ENCODE measurements at regions of chr1 and their contacts with region 1.

Region 1: GRCh38 chr1:26877326-26877725 is 12.8 kb downstream of the GPN2 start:
- DNase-seq: no peak
- ATAC-seq: no peak
- H3K4me3 Mint-ChIP-seq: no peak overlapping the region
- H3K27ac Mint-ChIP-seq: no peak overlapping the region
- H3K4me1 Mint-ChIP-seq: 0 out of 2 replicates have a peak, but pooled peaks cover 3% of the 10 kb centered on the region
- H3K27me3 Mint-ChIP-seq: no peaks in the 10 kb centered on the region
- CTCF ChIP-seq: no peak

Region 2: DNA sequence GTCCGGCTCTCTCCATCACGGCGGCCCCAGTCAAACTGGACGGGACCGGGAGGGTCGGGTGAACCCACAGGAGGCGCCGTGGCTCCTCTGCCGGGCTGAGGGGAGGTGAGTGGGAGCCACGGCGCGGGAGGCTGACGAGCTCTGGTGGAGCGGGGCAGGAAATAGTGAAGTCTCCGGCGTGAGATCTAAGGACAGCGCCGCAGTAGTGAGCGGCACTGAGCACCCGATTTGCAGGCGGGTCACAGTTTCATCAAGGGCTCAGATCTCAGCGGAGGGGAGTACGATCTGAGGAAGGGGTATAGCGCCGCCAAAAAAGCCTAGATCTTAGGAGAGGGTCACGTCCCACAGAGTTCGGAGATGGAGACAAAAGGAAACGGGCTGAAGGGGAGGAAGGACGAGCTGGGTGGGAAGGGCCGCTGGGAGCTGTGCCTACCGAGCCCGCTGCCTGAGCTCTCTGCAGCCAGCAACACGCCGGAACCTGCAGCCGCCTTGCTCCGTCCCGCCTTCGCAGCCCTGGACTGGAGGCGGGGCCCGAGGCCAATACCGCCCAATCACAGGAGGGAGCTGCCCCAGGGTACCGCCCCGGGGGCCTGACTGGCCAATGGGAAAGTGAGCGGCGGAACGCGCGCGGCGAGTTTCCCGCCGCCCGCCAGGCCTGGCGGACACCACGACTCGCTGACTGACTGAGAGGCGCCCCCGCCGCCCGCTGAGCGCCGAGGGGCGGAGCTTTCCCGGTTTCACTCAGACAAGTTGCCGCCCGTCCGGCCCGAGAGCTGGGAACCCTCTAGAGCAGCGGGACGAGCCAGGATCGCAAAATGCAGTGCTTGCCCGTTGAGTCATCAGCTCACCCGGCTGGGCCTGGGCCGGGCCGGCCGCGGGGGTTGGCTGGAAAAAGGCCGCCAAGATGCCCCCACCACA is 12.5 kb before region 1 on chr1:
- CTCF ChIA-PET with region 1: interaction called, 11 read pairs
- POLR2A ChIA-PET with region 1: interaction called, 3 read pairs
- DNase-seq: peak; percentile 98
- ATAC-seq: peak; percentile 87
- H3K4me3 Mint-ChIP-seq: peak overlapping the region; percentile 94
- H3K27ac Mint-ChIP-seq: peak overlapping the region; percentile 96
- H3K4me1 Mint-ChIP-seq: peaks cover 50% of the 10 kb centered on the region
- H3K27me3 Mint-ChIP-seq: peaks cover 16% of the 10 kb centered on the region
- CTCF ChIP-seq: no peak

Region 3: GRCh38 chr1:27111626-27112573 is 234.6 kb after region 1 on chr1:
- CTCF ChIA-PET with region 1: no interaction called
- POLR2A ChIA-PET with region 1: no interaction called
- DNase-seq: no peak
- ATAC-seq: peak; percentile 63
- H3K4me3 Mint-ChIP-seq: no peak overlapping the region
- H3K27ac Mint-ChIP-seq: peak overlapping the region; percentile 74
- H3K4me1 Mint-ChIP-seq: peaks cover 7% of the 10 kb centered on the region
- H3K27me3 Mint-ChIP-seq: no peaks in the 10 kb centered on the region
- CTCF ChIP-seq: no peak

Measured in WTC11 (cell line).